ENCODE measurements at regions of chr1 and their contacts with region 1.

Region 1: GRCh38 chr1:203267347-203267846 is 37.9 kb upstream of the BTG2 start:
- DNase-seq: peak; percentile 87
- ATAC-seq: peak; percentile 78

Region 2: DNA sequence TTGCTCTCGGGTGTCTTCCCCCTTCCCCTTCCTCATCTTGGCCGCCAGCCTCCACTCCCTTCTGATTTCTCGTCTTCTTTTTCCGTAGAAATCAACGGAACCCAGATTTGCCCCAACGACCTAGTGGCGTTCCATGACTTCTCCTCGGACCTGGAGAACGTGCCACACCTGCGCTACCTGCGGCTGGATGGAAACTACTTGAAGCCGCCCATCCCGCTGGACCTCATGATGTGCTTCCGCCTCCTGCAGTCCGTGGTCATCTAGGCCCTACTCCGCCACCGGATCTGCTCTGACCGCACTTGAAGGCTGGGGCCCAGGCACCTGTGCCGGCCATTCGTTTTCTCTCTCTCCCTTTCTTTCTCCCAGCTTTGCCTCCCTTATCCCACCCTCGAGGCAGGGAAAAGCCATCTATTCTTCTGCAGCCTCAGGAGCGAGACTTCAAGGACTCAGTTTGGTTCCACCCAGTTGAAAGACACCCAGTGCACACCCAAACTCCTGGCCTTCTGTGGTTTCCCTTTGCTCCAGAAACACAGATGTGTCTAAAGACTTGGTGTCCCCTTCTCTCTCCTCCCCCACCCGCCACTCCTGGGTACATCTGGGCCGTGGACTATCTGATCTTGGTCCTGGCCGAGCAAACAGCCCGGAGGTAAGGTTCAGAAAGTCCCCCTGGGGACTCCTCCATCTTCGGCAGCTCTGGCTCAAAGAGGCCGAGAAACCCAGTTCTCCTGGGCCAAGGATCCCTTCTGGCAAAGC is 219.4 kb after region 1 on chr1:
- intact Hi-C with region 1: loop called (anchors 2 to 10 kb)
- DNase-seq: no peak
- ATAC-seq: peak in 1 of 2 donors; percentile 9

Measured in left cardiac atrium (tissue), 4 donors.